ENCODE measurements at regions of chr18 and their contacts with region 1.

Region 1: GRCh38 chr18:36015629-36016028 is 43.1 kb downstream of the RMP24 start:
- DNase-seq: no peak
- ATAC-seq: no peak
- H3K4me3 Mint-ChIP-seq: no peak overlapping the region
- H3K27ac Mint-ChIP-seq: no peak overlapping the region
- H3K4me1 Mint-ChIP-seq: no peaks in the 10 kb centered on the region
- H3K27me3 Mint-ChIP-seq: no peaks in the 10 kb centered on the region

Region 2: GRCh38 chr18:35862119-35862640 is 153.4 kb before region 1 on chr18:
- CTCF ChIA-PET with region 1: no interaction called
- POLR2A ChIA-PET with region 1: no interaction called
- DNase-seq: no peak
- ATAC-seq: no peak
- H3K4me3 Mint-ChIP-seq: no peak overlapping the region
- H3K27ac Mint-ChIP-seq: no peak overlapping the region
- H3K4me1 Mint-ChIP-seq: peaks cover 4% of the 10 kb centered on the region
- H3K27me3 Mint-ChIP-seq: peaks cover 2% of the 10 kb centered on the region

Region 3: DNA sequence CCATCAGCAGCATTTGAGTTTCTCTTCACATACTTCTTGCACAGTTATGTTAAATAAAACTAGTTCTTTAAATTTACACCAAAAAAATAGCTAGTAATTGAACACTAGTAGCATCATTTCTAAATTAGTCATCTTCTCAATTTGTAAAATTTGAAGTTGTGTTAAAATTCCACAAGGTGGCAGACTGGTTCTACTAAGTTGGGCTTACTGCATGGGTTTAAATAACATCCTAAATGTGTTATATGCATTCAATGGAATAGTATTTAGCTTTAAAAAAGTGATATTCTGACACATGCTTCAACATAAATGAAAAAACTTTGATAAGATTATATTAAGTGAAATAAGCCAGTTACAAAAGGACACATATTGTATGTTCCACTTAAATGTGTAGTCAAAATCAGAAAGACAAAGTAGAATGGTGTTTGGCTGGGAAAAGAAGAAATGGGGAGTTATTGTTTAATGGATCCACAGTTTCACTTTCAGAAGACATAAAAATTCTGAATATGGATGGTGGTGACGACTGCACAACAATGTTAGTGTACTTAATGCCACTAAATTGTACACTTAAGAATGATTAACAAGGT is 80.4 kb after region 1 on chr18:
- CTCF ChIA-PET with region 1: interaction called, 12 read pairs
- POLR2A ChIA-PET with region 1: no interaction called
- DNase-seq: peak; percentile 28
- ATAC-seq: no peak
- H3K4me3 Mint-ChIP-seq: no peak overlapping the region
- H3K27ac Mint-ChIP-seq: no peak overlapping the region
- H3K4me1 Mint-ChIP-seq: peaks cover 10% of the 10 kb centered on the region
- H3K27me3 Mint-ChIP-seq: peaks cover 21% of the 10 kb centered on the region

Region 4: DNA sequence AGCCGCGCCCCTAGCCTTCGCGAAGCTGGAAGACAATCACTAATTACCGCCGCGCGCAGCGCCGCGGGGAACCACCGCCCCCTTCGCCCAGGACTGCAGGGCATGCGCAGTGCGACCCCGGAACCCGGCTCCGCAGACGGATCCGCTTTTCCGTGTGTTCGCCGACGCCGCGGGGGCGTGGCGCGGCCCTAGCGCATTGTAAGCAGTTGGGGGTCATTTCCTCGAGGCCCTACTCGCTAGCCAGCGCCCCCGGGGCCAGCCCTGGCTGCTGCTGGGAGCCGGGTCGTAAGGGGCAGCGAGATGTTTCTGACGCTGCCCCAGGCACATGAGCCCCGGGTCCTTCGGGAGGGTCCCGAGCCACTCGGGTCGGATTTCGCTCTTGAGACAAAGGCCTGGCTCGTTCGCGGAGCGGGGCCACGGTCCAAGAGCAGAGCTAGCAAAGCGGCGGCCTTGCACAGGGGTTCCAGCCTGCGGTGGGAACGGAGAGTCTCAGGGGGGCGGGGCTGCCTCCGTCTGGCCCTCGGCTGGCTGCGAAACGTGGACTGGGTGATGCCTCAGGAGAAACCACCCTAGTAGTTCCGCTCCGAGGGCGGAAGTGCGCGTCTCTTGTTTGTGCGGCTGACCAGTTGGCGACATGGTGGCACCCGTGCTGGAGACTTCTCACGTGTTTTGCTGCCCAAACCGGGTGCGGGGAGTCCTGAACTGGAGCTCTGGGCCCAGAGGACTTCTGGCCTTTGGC is 113.8 kb after region 1 on chr18 and contains the starts of genes ELP2 and SLC39A6:
- CTCF ChIA-PET with region 1: interaction called, 12 read pairs
- POLR2A ChIA-PET with region 1: no interaction called
- DNase-seq: peak; percentile 95
- ATAC-seq: peak; percentile 93
- H3K4me3 Mint-ChIP-seq: peak within 1 kb of the TSS; percentile 94
- H3K27ac Mint-ChIP-seq: peak within 1 kb of the TSS; percentile 95
- H3K4me1 Mint-ChIP-seq: peaks cover 44% of the 10 kb centered on the region
- H3K27me3 Mint-ChIP-seq: no peaks in the 10 kb centered on the region
- total RNA-seq, gene ELP2: 57.6 to 60.1 TPM
- total RNA-seq, gene SLC39A6: 19.4 to 19.7 TPM

Region 5: DNA sequence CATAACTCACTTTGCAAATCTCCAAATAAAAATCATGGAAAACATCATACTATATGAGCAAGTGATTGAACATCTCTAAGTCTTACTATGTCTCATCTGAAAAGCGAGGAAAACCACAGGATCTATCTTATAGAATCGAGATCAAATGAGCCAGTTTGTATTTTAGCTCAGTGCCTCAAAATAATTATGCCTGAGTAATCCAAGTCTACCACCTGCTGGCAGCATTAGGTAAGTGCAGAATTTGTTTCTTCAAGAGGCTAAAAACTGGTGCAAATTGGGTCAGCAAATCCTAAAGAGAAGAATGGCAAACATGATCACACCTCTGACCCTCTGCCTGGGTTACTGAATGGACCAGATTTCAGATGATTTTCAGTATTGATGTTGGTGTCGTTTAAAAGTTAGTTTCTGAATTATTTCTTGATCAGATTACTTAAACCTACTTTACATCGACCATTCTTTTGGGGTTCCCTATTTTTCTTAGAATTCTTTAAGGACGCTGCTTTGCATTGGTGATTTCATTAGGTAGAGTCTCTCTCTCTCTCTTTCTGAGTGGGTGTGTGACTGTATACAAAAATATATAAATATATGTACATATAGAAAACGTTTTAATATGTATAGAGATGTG is 269.2 kb after region 1 on chr18:
- CTCF ChIA-PET with region 1: interaction called, 47 read pairs
- POLR2A ChIA-PET with region 1: no interaction called
- DNase-seq: peak; percentile 59
- ATAC-seq: no peak
- H3K4me3 Mint-ChIP-seq: no peak overlapping the region
- H3K27ac Mint-ChIP-seq: no peak overlapping the region
- H3K4me1 Mint-ChIP-seq: peaks cover 1% of the 10 kb centered on the region
- H3K27me3 Mint-ChIP-seq: peaks cover 15% of the 10 kb centered on the region